ENCODE measurements at regions of chr3 and their contacts with region 1.

Region 1: DNA sequence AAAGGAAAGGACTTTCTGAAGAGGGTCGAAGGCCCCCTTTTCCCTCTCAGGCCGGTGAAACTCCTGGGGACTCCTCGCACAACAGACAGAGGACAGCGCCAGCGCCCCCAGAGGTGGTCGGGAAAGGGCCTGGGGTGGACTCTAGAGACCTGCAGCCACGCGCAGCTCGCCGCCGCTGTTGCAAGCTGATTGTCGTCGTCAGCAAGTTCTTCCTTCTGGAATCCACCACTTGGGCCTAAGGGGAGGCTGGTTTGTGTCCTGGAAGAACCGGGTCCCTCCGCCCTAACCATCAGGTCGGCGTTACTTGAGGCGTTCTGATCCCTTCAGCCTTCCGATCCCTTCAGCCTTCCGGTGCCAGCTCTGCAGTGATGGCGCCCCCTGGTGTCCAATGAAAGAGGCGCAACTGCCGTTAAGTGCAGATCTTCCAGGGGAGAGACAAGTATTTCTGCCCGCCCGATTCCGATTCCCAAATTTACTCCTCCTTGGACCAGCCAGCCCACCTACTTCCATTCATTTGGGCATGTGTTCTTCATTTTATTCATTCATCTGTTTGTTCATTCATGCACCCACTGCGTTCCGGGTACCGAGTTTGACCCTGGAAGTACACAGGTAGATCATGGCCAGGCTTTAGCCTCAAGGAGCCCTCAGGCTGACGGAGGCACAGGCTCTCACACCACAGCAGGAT is 77.2 kb upstream of the SLC6A11 start:
- DNase-seq: no peak
- H3K4me3 ChIP-seq: peak overlapping the region; percentile 50
- CTCF ChIP-seq: peak; percentile 88

Region 2: GRCh38 chr3:10322352-10322710 is 416.5 kb before region 1 on chr3:
- CTCF ChIA-PET with region 1: interaction called, 26 read pairs
- POLR2A ChIA-PET with region 1: no interaction called
- DNase-seq: no peak
- H3K4me3 ChIP-seq: no peak overlapping the region
- CTCF ChIP-seq: no peak

Region 3: GRCh38 chr3:10334459-10334858 is 404.4 kb before region 1 on chr3:
- CTCF ChIA-PET with region 1: interaction called, 20 read pairs
- POLR2A ChIA-PET with region 1: no interaction called
- DNase-seq: no peak
- H3K4me3 ChIP-seq: no peak overlapping the region
- CTCF ChIP-seq: peak; percentile 28

Region 4: DNA sequence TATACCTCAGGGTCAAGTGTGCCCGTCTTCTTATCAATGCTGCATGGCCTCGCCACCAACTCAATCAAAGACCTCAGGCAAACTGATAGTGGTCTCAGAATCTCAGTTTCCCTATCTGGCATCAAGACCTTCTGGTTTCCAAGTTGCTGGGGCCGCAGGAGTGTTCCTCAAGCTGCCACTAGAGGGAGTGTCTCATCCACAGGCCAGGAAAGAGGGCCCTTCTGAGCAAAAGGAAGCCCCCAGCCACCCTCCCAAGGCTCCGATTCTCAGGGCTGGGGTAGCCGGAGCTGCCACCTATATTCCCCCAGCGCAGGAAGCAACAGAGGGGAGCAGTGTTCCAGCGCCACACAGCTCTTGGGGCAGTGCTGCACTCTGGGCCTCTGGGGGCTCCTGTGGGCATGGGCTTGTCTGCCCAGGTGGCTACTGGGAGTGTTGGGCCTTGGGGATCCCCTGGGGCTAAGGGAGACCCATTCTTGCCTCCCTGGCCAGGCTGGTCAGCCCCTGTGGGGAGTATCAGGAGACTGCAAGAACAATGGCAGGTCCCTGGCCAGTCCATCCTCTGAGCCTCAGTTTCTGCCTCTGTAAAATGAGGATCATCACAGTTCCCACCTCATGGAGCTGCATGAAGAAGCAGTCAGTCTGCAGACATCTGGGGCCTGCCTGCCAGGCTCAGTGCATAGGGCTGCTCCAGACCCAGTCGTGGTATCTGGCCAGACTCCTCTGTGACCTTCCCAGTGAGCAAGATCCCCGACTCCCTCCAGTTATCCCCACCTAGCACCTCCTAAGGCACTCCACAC is 394.5 kb before region 1 on chr3:
- CTCF ChIA-PET with region 1: interaction called, 109 read pairs
- POLR2A ChIA-PET with region 1: no interaction called
- DNase-seq: no peak
- H3K4me3 ChIP-seq: no peak overlapping the region
- CTCF ChIP-seq: peak; percentile 92

Region 5: DNA sequence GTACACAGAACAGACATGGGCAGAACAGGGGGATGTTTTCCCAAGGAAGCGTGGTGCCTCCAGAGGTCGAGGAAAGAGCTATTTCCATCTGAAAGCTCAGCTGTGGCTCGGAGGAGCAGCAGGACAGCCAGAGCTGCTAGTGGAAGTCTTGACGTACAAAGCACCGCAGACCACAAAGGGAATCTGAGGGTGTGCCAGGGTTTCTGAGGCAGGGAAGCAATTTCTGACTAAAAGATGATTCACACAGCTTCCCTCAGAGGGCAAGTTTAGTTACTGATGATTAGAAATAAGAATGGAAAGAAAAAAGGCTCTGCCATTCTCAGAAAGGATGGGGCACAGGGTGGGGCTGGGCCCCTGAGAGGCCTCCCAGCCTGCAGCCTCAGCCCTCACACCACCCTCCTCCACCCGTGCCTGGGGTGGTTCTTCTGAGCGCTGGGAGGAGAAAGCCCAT is 372.2 kb before region 1 on chr3:
- CTCF ChIA-PET with region 1: interaction called, 10 read pairs
- POLR2A ChIA-PET with region 1: no interaction called
- DNase-seq: peak; percentile 96
- H3K4me3 ChIP-seq: no peak overlapping the region
- CTCF ChIP-seq: peak; percentile 5

Region 6: GRCh38 chr3:10417849-10418248 is 321.0 kb before region 1 on chr3:
- CTCF ChIA-PET with region 1: interaction called, 68 read pairs
- POLR2A ChIA-PET with region 1: no interaction called
- DNase-seq: no peak
- H3K4me3 ChIP-seq: no peak overlapping the region
- CTCF ChIP-seq: peak; percentile 29

Region 7: GRCh38 chr3:10518506-10519150 is 220.2 kb before region 1 on chr3:
- CTCF ChIA-PET with region 1: no interaction called
- POLR2A ChIA-PET with region 1: no interaction called
- DNase-seq: peak; percentile 4
- H3K4me3 ChIP-seq: no peak overlapping the region
- CTCF ChIP-seq: no peak

Region 8: DNA sequence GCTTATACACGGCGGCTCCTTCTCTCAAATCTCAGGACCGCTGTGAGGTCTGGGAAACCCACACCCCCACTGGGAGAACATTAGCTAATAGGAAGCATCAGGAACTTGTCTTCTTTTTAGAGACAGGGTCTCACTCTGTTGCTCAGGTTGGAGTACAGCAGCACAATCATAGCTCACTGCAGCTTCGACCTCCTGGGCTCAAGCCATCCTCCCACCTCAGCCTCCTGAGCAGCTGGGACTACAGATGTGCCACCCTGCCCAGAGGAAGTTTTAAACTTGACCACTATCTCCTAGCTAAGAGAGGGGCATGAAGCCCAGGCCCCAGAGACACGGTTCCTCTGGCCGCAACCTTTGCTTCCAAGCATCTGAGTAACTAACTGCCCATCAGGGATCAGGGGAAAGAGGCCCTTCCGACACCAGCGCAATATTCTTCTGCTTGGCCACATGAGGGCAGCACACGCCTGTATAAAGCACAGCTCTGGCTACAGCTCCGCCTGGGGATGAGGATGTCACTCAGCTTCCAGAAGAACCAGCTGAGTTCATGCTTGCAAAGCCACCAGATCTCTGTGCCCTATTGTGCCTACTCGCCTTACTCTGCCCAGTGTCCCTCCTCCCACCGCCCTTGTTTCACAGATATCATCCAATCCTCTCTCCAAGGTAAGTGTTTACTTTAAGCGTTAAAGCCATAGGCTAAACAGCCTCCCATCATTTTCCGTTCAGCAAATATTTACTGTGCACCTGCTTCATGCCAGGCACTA is 19.7 kb after region 1 on chr3:
- CTCF ChIA-PET with region 1: interaction called, 17 read pairs
- POLR2A ChIA-PET with region 1: no interaction called
- DNase-seq: peak; percentile 24
- H3K4me3 ChIP-seq: no peak overlapping the region
- CTCF ChIP-seq: peak; percentile 77

Region 9: GRCh38 chr3:10917176-10917575 is 178.3 kb after region 1 on chr3:
- CTCF ChIA-PET with region 1: no interaction called
- POLR2A ChIA-PET with region 1: no interaction called
- DNase-seq: no peak
- H3K4me3 ChIP-seq: no peak overlapping the region
- CTCF ChIP-seq: no peak

Measured in AG04449 (cell line).